CD4-positive, alpha-beta memory T cell (primary cell): ENCODE measurements at regions of chr17 and their contacts with region 1.

Region 1: DNA sequence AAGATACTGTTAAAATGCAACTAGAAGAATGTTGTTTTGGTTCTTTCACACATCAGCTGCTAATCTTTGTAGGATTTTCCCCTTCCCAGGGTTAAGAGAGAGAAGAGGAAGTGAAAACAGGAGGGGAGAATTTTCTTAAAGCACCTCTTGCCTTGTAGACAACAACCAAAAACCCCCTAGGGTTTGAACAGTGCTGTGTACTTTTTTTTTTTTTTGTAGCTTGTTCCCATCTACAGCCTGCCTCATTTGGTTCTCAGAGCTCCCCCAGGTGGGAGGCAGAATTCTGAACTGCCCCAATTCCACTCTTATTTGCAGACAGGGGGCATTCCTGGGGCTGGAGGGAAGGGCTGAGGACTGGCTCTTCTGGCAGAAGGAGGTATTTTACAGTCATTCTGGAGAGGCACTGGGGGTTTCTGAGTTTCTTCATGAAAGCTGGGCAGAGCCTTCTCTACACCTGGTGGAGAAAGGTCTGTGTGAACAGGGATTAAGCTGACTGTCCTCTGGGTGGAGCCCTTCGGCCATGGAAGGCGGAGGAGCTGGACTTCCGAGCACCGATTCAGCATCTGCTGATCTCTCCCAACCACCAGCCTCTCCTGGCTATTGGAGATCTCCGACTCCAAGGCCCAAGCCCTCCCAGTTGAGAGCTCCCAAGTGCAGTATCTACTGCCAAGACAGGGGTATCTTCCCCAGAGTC is 32.2 kb downstream of the SMARCE1 start:
- DNase-seq: peak in 4 of 5 donors; percentile 53 to 70 (median 56)
- H3K4me3 ChIP-seq: no peak overlapping the region
- H3K4me3 Mint-ChIP-seq: peak overlapping the region; percentile 41 to 83 (median 70)
- H3K27ac ChIP-seq: peak overlapping the region; percentile 66
- H3K27ac Mint-ChIP-seq: peak overlapping the region; percentile 86 to 97 (median 96)
- H3K4me1 ChIP-seq: peaks cover 76% of the 10 kb centered on the region
- H3K4me1 Mint-ChIP-seq: peaks cover 45 to 76% (median 66%) of the 10 kb centered on the region in 4 donors
- H3K27me3 ChIP-seq: no peaks in the 10 kb centered on the region
- H3K27me3 Mint-ChIP-seq: no peaks in the 10 kb centered on the region

Region 2: DNA sequence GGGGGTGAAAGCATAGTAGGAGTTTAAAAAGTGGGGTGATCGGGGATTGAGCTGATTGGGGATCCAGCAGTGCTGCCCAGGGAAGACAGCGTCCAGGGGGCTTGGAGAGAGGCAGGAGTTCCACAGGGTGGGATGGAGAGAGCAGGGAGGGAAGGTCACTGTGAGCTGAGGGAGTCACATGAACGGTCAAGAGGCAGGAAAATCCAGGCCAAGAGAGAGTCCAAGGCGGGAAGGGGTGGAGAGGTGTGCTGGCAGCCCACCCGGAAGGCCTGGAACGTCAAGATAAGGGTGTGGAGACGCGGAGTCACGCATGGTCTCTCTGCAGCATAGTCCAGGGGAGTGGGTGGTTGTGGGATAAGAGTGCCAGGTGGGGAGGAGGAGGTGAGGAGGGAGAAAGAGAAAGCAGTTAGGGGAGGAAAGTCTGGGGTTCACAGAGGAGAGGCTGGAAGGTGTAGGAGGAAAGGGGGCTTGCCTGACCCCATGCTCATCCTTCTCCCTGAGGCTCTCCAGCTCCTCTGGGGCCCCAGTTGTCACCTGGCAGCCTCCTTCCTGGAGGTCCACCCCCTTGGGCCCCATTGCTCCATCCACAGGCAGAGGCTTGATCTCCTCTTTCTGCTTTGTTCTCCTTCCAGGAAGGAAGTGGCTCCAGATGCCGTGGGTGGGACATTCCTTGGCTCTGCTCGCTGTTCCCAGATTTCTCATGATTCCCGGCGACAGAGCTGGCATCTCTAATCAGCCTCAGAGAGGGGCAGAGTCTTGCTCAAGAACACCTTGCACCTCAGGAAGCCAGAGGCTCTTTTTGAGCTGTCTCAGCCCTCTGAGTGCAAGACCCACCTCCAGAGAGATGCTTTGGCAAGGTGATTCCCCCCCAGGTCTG is 78.9 kb before region 1 on chr17:
- CTCF ChIA-PET with region 1: interaction called, 43 read pairs
- POLR2A ChIA-PET with region 1: interaction called, 33 read pairs
- intact Hi-C with region 1: no loop called
- DNase-seq: no peak
- H3K4me3 ChIP-seq: no peak overlapping the region
- H3K4me3 Mint-ChIP-seq: peak overlapping the region in 3 of 8 donors; percentile 6 to 67 (median 51)
- H3K27ac ChIP-seq: no peak overlapping the region
- H3K27ac Mint-ChIP-seq: peak overlapping the region; percentile 65 to 100 (median 88)
- H3K4me1 ChIP-seq: peaks cover 90% of the 10 kb centered on the region
- H3K4me1 Mint-ChIP-seq: peaks cover 68 to 97% (median 84%) of the 10 kb centered on the region in 4 donors
- H3K27me3 ChIP-seq: no peaks in the 10 kb centered on the region
- H3K27me3 Mint-ChIP-seq: peaks cover 0 to 6% of the 10 kb centered on the region in 2 donors

Region 3: GRCh38 chr17:40564883-40565768 is 50.3 kb before region 1 on chr17 and contains the start of gene CCR7:
- CTCF ChIA-PET with region 1: interaction called, 435 read pairs
- POLR2A ChIA-PET with region 1: interaction called, 1,226 read pairs
- intact Hi-C with region 1: loop called (anchors 1 kb)
- DNase-seq: peak; percentile 83 to 94 (median 85)
- H3K4me3 ChIP-seq: peak within 1 kb of the TSS; percentile 94 to 96
- H3K4me3 Mint-ChIP-seq: peak within 1 kb of the TSS; percentile 88 to 98 (median 96)
- H3K27ac ChIP-seq: peak within 1 kb of the TSS; percentile 94
- H3K27ac Mint-ChIP-seq: peak within 1 kb of the TSS; percentile 95 to 100 (median 99)
- H3K4me1 ChIP-seq: peaks cover 73% of the 10 kb centered on the region
- H3K4me1 Mint-ChIP-seq: peaks cover 38 to 83% (median 60%) of the 10 kb centered on the region in 4 donors
- H3K27me3 ChIP-seq: no peaks in the 10 kb centered on the region
- H3K27me3 Mint-ChIP-seq: no peaks in the 10 kb centered on the region
- total RNA-seq, gene CCR7: 268 to 269 TPM

Region 4: GRCh38 chr17:40588552-40588951 is 26.9 kb before region 1 on chr17:
- CTCF ChIA-PET with region 1: interaction called, 8 read pairs
- POLR2A ChIA-PET with region 1: interaction called, 38 read pairs
- intact Hi-C with region 1: no loop called
- DNase-seq: peak in 1 of 5 donors; percentile 35
- H3K4me3 ChIP-seq: peak overlapping the region in 1 of 2 donors; percentile 1
- H3K4me3 Mint-ChIP-seq: peak overlapping the region in 7 of 8 donors; percentile 36 to 86 (median 75)
- H3K27ac ChIP-seq: no peak overlapping the region
- H3K27ac Mint-ChIP-seq: peak overlapping the region in 6 of 7 donors; percentile 9 to 89 (median 77)
- H3K4me1 ChIP-seq: peaks cover 50% of the 10 kb centered on the region
- H3K4me1 Mint-ChIP-seq: peaks cover 45 to 71% (median 56%) of the 10 kb centered on the region in 4 donors
- H3K27me3 ChIP-seq: no peaks in the 10 kb centered on the region
- H3K27me3 Mint-ChIP-seq: no peaks in the 10 kb centered on the region

Region 5: GRCh38 chr17:40647624-40648383 is 32.4 kb after region 1 on chr17 and contains the start of gene SMARCE1:
- CTCF ChIA-PET with region 1: interaction called, 6 read pairs
- POLR2A ChIA-PET with region 1: interaction called, 28 read pairs
- intact Hi-C with region 1: no loop called
- DNase-seq: peak; percentile 76 to 83 (median 77)
- H3K4me3 ChIP-seq: peak within 1 kb of the TSS; percentile 82 to 92
- H3K4me3 Mint-ChIP-seq: peak within 1 kb of the TSS; percentile 88 to 98 (median 94)
- H3K27ac ChIP-seq: peak within 1 kb of the TSS; percentile 95
- H3K27ac Mint-ChIP-seq: peak within 1 kb of the TSS; percentile 98 to 100 (median 99)
- H3K4me1 ChIP-seq: peaks cover 47% of the 10 kb centered on the region
- H3K4me1 Mint-ChIP-seq: peaks cover 23 to 58% (median 37%) of the 10 kb centered on the region in 4 donors
- H3K27me3 ChIP-seq: no peaks in the 10 kb centered on the region
- H3K27me3 Mint-ChIP-seq: no peaks in the 10 kb centered on the region
- total RNA-seq, gene SMARCE1: 87.6 to 91.0 TPM

Region 6: DNA sequence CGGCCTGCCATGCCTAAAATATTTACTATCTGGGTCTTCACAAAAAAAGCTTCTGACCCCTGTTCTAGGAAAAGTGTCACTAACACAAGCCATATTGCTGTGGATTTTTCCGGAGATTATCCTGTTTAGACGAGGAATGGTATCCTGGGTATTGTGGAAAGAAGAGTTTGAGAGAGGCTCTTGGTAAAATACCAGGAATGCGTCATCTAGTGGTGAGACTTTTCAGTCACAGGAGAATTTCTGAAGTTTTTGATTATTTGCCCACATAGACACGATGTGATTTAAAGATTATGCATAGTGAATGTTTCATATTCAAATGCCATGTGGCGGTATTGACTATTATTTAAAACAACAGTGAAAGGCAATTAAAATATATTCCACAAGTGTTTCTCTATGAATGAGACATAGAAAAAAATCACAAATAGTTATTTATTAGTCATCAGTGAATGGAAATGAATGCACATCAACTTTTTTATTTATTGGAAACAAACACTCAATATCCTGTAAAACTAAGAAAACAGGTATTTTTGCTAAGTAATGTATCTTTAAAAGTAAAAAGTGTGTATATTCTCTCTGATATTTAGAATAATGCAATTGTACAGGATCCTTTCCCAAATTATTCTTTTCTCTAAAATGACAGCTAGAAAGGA is 176.5 kb after region 1 on chr17:
- CTCF ChIA-PET with region 1: interaction called, 8 read pairs
- POLR2A ChIA-PET with region 1: no interaction called
- intact Hi-C with region 1: loop called (anchors 1 kb)
- DNase-seq: no peak
- H3K4me3 ChIP-seq: no peak overlapping the region
- H3K4me3 Mint-ChIP-seq: no peak overlapping the region
- H3K27ac ChIP-seq: no peak overlapping the region
- H3K27ac Mint-ChIP-seq: no peak overlapping the region
- H3K4me1 ChIP-seq: no peaks in the 10 kb centered on the region
- H3K4me1 Mint-ChIP-seq: no peaks in the 10 kb centered on the region
- H3K27me3 ChIP-seq: no peaks in the 10 kb centered on the region
- H3K27me3 Mint-ChIP-seq: peaks cover 25 to 26% of the 10 kb centered on the region in 2 donors